Ascending aorta (tissue), 2 donors: ENCODE measurements at regions of chr20 and their contacts with region 1.

Region 1: DNA sequence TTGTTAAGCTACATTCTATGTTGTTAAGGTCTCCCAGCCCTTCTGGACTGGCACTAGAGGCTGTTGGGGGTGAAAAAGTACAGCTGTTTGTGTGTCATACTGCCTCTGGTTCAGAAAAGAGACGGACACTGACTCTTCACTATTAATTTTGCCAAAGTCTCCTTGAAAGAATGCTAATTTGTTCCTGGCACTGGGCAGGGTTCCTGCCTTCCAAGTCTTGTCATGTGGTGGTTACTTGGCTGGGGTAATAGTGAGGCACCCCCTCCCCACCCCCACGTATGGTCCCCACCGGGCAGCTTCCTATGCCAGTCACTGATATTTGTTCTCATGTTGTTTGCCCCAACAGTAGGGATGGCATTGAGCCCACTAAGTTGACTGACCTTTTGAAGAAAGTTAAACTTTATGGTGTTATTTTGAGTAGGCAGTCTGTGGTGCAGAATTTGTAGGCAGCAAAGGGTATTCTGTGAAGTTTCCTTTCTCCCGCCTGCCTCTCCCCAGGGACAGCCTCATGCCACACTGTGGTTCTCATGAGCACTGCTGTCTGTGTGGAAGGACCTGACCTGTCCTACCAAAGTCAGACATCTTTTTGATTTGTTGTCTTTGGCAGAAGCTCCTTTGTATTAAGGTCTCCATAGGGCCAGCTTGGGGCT is 8.7 kb downstream of the CDS2 start:
- DNase-seq: no peak
- H3K4me3 ChIP-seq: peak overlapping the region; percentile 0 to 29
- H3K27ac ChIP-seq: peak overlapping the region; percentile 65 to 68
- H3K4me1 ChIP-seq: peaks cover 7 to 39% of the 10 kb centered on the region in 2 donors
- H3K27me3 ChIP-seq: no peaks in the 10 kb centered on the region
- CTCF ChIP-seq: no peak

Region 2: GRCh38 chr20:5119435-5120188 is 15.9 kb before region 1 on chr20 and contains the start of gene PCNA:
- intact Hi-C with region 1: loop called (anchors 1 kb)
- DNase-seq: peak; percentile 94 to 98
- H3K4me3 ChIP-seq: peak within 1 kb of the TSS; percentile 88 to 98
- H3K27ac ChIP-seq: peak within 1 kb of the TSS; percentile 86 to 94
- H3K4me1 ChIP-seq: peaks cover 7 to 21% of the 10 kb centered on the region in 2 donors
- H3K27me3 ChIP-seq: no peaks in the 10 kb centered on the region
- CTCF ChIP-seq: no peak
- total RNA-seq, gene PCNA: 52.5 TPM

Region 3: GRCh38 chr20:5148581-5148980 is 13.1 kb after region 1 on chr20:
- intact Hi-C with region 1: loop called (anchors 2 kb)
- DNase-seq: no peak
- H3K4me3 ChIP-seq: peak overlapping the region in 1 of 2 donors; percentile 25
- H3K27ac ChIP-seq: peak overlapping the region; percentile 71 to 72
- H3K4me1 ChIP-seq: peaks cover 9 to 48% of the 10 kb centered on the region in 2 donors
- H3K27me3 ChIP-seq: no peaks in the 10 kb centered on the region
- CTCF ChIP-seq: no peak

Region 4: DNA sequence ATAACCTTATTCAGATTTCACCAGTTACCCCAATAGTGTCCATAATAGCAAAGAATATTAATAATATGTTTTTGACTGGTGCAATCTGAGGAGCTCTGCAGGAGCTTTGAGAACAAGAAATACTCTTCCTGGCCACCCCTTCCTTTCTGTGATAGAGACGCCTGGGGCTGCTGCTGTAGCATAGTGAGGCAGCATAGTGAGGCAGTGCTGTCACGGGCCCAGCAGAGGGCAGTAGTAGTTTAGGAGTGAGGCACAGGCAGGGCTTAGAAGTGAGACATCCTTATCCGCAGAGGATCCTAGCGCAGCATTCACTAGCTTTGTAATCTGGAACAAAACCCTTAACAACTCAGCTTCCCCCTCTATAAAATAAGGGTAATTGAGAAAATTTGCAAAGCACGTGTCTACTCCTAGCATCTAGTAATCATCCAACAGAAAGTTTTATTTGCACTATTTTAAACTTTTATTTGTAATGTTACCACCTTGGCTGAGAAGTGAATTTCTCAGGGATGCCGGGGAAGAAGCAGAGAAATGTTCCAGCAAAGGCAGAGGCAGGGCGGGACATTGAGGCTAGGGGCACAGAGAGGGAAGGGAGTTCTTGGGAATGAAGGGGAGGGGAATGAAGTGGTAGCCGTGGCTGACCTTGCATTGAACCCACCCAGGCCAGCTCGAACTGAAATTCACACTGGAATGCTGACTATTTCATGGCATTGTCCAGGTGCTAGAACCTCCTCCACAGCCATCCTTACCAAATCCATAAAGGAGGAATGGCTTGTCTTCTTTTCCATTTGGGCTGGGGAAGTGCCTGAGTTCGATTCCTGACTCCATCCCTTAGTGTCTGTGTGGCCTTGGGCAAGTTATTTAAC is 70.1 kb after region 1 on chr20:
- intact Hi-C with region 1: no loop called
- DNase-seq: peak; percentile 29 to 84
- H3K4me3 ChIP-seq: no peak overlapping the region
- H3K27ac ChIP-seq: no peak overlapping the region
- H3K4me1 ChIP-seq: peaks cover 0 to 3% of the 10 kb centered on the region in 2 donors
- H3K27me3 ChIP-seq: no peaks in the 10 kb centered on the region
- CTCF ChIP-seq: peak; percentile 60 to 85 (median 77)